WTC11 (cell line): ENCODE measurements at regions of chr19 and their contacts with region 1.

Region 1: DNA sequence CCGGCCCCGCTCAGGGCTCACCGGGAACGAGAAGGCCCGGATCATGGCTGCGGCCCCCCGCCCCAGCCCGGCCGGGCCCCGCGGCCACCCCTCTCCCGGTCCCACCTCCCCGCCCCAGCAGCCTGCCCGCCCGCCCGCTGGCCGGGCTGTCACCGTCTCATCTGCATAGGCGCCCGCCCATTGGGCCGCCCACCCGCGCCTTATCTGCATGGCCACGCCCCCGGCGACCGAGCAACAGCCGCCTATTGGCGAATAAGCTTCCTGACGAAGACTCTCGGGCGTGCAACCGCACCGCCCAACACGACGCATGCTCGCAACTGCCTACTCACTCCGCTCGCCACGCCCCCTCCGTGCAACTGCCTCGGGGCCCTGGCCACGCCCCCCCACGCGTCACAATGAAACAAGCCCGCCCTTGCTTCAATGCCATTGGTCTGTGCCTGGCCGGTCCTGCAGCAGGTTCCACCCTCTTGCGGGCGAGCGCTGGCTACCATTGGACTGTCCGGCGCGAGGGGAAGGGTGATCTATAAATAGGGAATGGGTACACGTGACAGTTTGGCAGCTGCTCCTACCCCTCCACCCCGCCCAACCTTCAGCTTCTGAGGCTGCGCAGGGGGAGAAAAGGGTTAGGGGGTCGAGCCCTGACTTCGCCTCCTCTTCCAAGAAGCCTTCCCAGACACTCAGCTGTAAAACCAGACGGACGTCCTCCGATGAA is at the start of gene DACT3:
- DNase-seq: peak; percentile 100
- ATAC-seq: peak; percentile 91
- H3K4me3 Mint-ChIP-seq: peak within 1 kb of the TSS; percentile 76
- H3K27ac Mint-ChIP-seq: peak within 1 kb of the TSS; percentile 85
- H3K4me1 Mint-ChIP-seq: peaks cover 19% of the 10 kb centered on the region
- H3K27me3 Mint-ChIP-seq: peaks cover 51% of the 10 kb centered on the region
- CTCF ChIP-seq: no peak
- total RNA-seq, gene DACT3: 1.8 to 1.9 TPM (median 1.8 TPM) in 3 replicates

Region 2: GRCh38 chr19:46542428-46543230 is 118.5 kb before region 1 on chr19:
- CTCF ChIA-PET with region 1: interaction called, 11 read pairs
- POLR2A ChIA-PET with region 1: no interaction called
- DNase-seq: peak; percentile 93
- ATAC-seq: peak; percentile 80
- H3K4me3 Mint-ChIP-seq: no peak overlapping the region
- H3K27ac Mint-ChIP-seq: no peak overlapping the region
- H3K4me1 Mint-ChIP-seq: peaks cover 5% of the 10 kb centered on the region
- H3K27me3 Mint-ChIP-seq: peaks cover 3% of the 10 kb centered on the region; the same call in 1 of the 2 replicates
- CTCF ChIP-seq: peak; percentile 92

Region 3: DNA sequence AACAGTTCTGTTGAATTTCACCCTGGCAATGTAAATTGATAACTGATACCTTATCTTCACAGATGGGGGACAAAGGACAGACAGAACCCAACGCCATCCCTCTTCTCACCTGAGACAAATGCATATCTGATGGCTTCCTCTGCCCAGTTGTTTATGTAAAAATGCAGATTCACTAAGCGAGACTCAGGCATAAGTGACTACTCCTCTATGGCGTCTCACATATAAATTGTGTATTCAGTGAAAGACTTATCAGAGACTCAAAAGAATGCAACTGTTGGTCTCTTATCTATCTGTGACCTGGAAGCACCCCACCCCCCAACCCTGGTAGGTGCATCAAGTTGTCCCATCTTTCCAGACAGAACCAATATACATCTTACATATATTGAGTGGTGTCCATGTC is 73.3 kb before region 1 on chr19:
- CTCF ChIA-PET with region 1: no interaction called
- POLR2A ChIA-PET with region 1: no interaction called
- DNase-seq: no peak
- ATAC-seq: no peak
- H3K4me3 Mint-ChIP-seq: no peak overlapping the region
- H3K27ac Mint-ChIP-seq: no peak overlapping the region
- H3K4me1 Mint-ChIP-seq: no peaks in the 10 kb centered on the region
- H3K27me3 Mint-ChIP-seq: no peaks in the 10 kb centered on the region; the same call in none of the 2 replicates
- CTCF ChIP-seq: no peak

Region 4: DNA sequence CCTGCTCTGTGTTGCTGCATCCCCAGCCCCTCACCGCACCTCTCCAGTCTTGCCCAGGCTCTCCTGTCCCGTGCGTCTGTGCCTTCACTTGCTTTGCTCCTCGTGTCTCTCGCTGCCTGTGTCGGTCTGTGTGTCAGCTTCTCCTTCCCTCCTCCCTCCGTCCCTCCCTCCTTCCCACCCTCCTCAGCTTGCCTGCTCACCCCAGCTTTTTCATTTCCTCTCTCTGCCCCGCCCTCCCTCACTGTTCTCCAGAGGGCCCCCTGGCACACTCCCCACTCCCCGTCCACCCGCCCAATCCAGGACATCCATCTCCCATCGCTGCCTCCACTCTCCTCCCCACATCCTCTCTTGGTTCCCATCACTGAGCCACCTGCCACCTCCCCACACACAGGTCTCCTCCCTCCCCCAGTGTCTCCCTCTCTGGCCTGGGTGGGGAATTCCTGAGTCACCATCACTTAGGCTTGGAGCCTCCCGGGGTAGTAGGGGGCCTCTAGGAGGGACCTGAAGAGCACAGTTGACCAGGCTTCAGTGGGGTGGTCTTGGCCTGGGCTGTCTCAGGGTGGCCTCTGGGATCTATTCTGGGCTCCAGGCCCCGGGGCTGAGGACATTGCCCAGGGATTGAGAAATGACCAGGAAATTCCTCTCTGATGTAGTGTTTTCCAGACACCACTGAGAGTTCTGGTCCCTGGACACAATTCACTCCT is 36.1 kb before region 1 on chr19 and contains the start of gene PTGIR:
- CTCF ChIA-PET with region 1: interaction called, 484 read pairs
- POLR2A ChIA-PET with region 1: interaction called, 3 read pairs
- DNase-seq: no peak
- ATAC-seq: peak; percentile 53
- H3K4me3 Mint-ChIP-seq: no peak within 1 kb of the TSS
- H3K27ac Mint-ChIP-seq: no peak within 1 kb of the TSS
- H3K4me1 Mint-ChIP-seq: peaks cover 8% of the 10 kb centered on the region
- H3K27me3 Mint-ChIP-seq: no peaks in the 10 kb centered on the region; the same call in 1 of the 2 replicates
- CTCF ChIP-seq: no peak
- total RNA-seq, gene PTGIR: 0.24 TPM in 1 of 3 replicates, not detected in the others

Region 5: DNA sequence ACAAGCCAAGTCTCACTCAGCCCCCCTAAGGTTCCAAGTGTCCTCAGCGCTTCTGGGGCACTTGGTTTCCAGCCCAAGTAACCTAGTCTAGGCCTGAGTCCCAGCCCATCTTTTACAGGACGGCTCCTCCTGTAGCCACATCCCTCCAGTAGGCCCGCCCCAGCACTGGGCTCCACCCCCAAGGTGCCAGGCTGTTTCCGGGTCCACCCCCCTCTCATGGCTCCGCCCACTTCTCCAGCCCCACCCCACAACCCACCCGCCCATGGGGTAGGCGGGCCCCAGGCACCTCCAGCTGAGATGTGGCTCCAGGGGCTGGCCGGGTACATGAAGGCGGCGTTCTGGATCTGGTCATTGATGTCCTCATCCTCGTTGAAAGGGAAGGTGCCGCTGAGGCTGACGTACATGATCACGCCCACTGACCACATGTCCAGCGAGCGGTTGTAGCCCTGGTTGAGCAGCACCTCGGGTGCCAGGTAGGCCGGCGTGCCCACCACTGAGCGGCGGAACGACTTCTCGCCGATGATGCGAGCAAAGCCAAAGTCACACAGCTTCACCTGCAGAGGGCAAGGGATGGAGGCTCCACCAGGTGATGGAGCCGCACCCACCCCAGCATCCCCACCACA is 17.0 kb after region 1 on chr19:
- CTCF ChIA-PET with region 1: interaction called, 25 read pairs
- POLR2A ChIA-PET with region 1: no interaction called
- DNase-seq: peak; percentile 90
- ATAC-seq: peak; percentile 87
- H3K4me3 Mint-ChIP-seq: no peak overlapping the region
- H3K27ac Mint-ChIP-seq: peak overlapping the region; percentile 85
- H3K4me1 Mint-ChIP-seq: 0 out of 2 replicates have a peak, but pooled peaks cover 8% of the 10 kb centered on the region
- H3K27me3 Mint-ChIP-seq: no peaks in the 10 kb centered on the region
- CTCF ChIP-seq: no peak

Region 6: DNA sequence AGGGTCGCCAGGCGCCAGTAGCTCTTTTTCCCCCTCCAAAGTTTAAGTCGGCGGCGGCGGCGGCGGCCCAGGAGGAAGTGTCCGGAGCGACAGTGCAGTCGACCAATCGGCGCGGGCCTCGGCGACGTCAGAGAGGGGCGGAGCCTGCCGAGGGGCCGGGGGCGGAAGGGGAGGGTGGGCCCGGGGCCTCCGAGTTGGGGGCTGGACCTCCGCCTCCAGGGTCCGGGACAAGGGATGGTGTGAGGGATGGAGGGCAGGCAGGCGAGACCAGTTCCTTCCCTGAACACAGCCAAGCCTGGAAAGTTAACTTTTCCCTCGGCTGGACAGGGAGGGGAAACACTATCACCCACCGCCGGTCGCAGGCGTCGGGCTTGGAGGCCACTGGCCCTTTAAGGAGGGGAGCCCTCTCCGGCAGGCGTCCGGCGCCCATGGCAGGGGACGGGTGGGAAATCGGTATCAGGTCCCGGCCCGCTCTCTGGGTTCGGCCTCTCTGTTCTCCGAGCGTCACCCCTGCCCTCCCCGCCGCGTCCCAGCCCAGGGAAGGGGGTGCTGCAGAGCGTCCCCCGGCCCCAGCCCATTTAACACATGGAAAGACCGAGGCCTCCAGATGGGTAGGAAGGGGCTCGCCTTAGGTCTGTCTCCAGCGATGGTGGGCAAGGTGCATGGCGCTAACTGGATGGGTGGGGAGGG is 56.0 kb after region 1 on chr19 and contains the start of gene PRKD2:
- CTCF ChIA-PET with region 1: interaction called, 32 read pairs
- POLR2A ChIA-PET with region 1: no interaction called
- DNase-seq: peak; percentile 97
- ATAC-seq: peak; percentile 62
- H3K4me3 Mint-ChIP-seq: peak within 1 kb of the TSS; percentile 95
- H3K27ac Mint-ChIP-seq: peak within 1 kb of the TSS; percentile 94
- H3K4me1 Mint-ChIP-seq: peaks cover 18% of the 10 kb centered on the region
- H3K27me3 Mint-ChIP-seq: no peaks in the 10 kb centered on the region
- CTCF ChIP-seq: no peak
- total RNA-seq, gene PRKD2: 78.5 to 100 TPM (median 81.5 TPM) in 3 replicates